ENCODE measurements at regions of chr2 and their contacts with region 1.

Region 1: GRCh38 chr2:141911485-141912066 is 219.2 kb downstream of the LRP1B start:
- DNase-seq: peak; percentile 50
- ATAC-seq: peak; percentile 93
- H3K4me3 ChIP-seq: no peak overlapping the region
- H3K27ac ChIP-seq: no peak overlapping the region
- H3K4me1 ChIP-seq: no peaks in the 10 kb centered on the region
- H3K27me3 ChIP-seq: no peaks in the 10 kb centered on the region
- CTCF ChIP-seq: peak; percentile 47
- EP300 ChIP-seq: no peak
- POLR2A ChIP-seq: no peak
- RAD21 ChIP-seq: no peak

Region 2: DNA sequence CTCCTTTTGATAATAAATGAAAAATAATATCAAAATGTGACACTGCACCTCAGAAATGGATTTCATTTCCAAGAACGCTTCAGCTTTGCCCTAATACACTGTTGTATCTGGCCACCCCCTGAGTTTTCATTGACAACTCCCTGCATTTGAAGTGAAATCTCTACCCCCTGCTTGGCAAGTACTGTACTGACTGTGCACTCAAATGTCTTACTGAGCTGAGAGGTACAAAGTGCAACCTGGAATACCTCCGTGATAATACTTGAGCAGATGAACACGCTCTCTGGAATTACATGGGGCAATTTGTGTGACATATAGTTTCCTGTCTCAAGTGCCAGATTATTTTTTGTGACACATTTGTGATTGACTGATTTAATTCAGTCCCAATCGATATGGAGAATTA is 11.8 kb before region 1 on chr2:
- CTCF ChIA-PET with region 1: no interaction called
- POLR2A ChIA-PET with region 1: no interaction called
- in situ Hi-C with region 1: no loop called
- intact Hi-C with region 1: no loop called
- DNase-seq: no peak
- ATAC-seq: no peak
- H3K4me3 ChIP-seq: no peak overlapping the region
- H3K27ac ChIP-seq: no peak overlapping the region
- H3K4me1 ChIP-seq: no peaks in the 10 kb centered on the region
- H3K27me3 ChIP-seq: no peaks in the 10 kb centered on the region
- CTCF ChIP-seq: no peak
- EP300 ChIP-seq: no peak
- POLR2A ChIP-seq: no peak
- RAD21 ChIP-seq: no peak

Region 3: DNA sequence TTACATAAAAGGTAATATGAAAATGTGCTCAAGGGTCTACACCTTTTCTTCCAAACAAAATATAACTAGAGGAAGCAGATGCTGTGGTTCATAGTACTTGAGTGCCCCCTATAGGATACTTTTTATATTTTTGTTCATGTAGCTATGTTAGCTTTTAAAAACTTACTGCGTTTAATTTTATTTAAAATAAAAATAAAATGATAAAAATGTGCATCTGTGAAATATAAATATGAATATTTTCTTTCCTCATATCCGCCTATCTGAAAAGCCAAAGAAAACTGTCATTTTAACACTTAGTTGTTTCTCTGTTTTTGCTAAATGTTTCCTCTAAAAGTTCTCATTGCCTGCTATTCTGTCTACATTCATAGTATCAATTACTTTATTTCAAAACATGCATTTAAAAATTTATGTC is 228.9 kb after region 1 on chr2:
- CTCF ChIA-PET with region 1: no interaction called
- POLR2A ChIA-PET with region 1: no interaction called
- in situ Hi-C with region 1: no loop called
- intact Hi-C with region 1: loop called (anchors 2 kb)
- DNase-seq: peak; percentile 12
- ATAC-seq: peak; percentile 56; the same call in 2 of the 3 replicates
- H3K4me3 ChIP-seq: no peak overlapping the region
- H3K27ac ChIP-seq: no peak overlapping the region
- H3K4me1 ChIP-seq: no peaks in the 10 kb centered on the region
- H3K27me3 ChIP-seq: no peaks in the 10 kb centered on the region
- CTCF ChIP-seq: peak; percentile 57
- EP300 ChIP-seq: no peak
- POLR2A ChIP-seq: no peak
- RAD21 ChIP-seq: peak; percentile 54